HAP-1 (cell line): ENCODE measurements at regions of chr3 and their contacts with region 1.

Region 1: DNA sequence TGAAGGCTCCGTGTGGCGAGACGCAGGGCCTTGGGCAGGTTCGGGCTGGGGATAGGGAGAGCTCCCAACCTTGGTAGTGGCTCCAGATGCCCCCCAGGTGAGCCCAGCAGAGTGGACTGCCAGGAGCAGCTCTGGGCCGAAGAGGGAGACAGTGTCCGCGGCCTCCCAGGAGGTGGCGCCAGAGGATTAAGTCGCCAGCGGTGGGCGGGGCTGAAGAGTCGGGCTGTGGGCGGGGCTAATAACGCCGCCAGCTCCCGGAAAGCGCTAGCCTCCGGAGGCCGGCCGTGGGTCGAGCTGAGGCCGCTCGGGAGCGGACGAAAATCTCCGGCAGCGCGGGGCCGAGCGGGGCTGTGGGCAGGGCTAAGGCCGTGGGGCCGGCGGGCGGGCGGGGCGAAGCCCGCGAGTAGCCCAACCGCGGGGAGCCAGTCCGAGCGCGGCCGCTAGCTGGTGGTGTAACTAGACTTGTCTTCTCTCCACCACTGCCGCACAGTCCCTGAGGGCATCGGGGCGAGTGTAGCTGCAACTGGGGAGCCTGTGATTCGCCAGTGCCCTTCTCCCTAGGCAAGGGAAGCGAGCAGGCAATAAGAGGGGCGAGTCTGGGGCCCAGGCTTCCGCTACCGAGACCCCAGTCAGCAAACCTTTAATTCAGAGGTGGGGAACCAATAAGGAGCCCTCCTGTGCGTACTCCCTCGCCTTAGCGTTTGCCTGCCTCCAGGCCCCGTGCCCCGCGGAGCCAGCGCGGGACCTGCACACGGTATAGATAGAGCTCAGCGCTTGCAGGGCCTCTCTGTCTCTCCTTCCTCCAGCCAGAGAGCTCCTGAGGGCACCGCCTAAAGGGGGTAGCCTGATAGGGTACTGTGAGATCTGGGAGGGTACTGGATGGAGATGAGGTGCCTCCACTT is 14.4 kb upstream of the BSN start:
- DNase-seq: peak; percentile 90 to 96
- H3K4me3 ChIP-seq: peak overlapping the region; percentile 39
- H3K4me1 ChIP-seq: peaks cover 6% of the 10 kb centered on the region
- H3K27me3 ChIP-seq: no peaks in the 10 kb centered on the region; the same call in none of the 2 replicates

Region 2: GRCh38 chr3:49661281-49661680 is 121.4 kb after region 1 on chr3:
- in situ Hi-C with region 1: no loop called
- DNase-seq: no peak
- H3K4me3 ChIP-seq: no peak overlapping the region
- H3K4me1 ChIP-seq: no peaks in the 10 kb centered on the region
- H3K27me3 ChIP-seq: no peaks in the 10 kb centered on the region

Region 3: DNA sequence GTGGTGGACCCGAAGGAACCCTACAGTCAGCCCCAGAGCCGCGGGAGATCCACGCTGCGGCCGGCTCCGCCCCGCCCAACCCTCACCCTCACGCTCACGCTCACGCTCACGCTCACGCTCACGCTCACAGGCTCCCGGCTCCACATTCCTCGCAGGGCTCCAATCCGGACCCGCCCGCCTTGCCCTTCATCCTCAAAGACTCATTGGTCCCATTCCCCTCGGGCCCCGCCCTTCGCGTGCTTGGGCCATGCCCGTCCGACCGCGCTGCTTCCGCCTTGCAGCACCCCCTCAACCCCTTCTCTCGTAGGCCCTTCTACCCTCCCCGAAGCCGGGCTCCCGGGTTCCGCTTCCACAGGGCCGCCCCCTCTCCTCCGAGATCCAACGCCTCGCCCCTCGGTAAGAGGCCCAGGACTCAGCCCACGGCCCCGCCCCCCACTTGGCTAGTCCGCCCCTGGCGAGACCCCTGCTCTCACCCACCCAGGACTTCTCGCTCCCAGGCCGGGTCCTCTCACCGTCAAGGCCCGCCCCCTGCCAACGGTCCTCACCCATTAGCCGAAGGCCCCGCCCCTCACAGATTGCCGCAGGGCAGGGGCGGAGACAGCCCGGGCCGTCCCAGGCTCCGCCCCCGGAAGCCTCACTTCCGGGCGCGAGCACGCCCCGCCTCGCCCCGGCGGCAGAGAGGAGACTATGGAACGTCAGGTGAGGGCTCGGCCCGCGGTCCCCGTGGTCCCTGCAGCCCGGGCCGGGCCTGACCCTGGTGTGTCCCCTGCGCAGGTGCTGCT is 134.0 kb after region 1 on chr3 and contains the start of gene APEH:
- in situ Hi-C with region 1: loop called (anchors 5 kb)
- DNase-seq: peak; percentile 95 to 99
- H3K4me3 ChIP-seq: peak within 1 kb of the TSS; percentile 89
- H3K4me1 ChIP-seq: peaks cover 12% of the 10 kb centered on the region
- H3K27me3 ChIP-seq: no peaks in the 10 kb centered on the region

Region 4: DNA sequence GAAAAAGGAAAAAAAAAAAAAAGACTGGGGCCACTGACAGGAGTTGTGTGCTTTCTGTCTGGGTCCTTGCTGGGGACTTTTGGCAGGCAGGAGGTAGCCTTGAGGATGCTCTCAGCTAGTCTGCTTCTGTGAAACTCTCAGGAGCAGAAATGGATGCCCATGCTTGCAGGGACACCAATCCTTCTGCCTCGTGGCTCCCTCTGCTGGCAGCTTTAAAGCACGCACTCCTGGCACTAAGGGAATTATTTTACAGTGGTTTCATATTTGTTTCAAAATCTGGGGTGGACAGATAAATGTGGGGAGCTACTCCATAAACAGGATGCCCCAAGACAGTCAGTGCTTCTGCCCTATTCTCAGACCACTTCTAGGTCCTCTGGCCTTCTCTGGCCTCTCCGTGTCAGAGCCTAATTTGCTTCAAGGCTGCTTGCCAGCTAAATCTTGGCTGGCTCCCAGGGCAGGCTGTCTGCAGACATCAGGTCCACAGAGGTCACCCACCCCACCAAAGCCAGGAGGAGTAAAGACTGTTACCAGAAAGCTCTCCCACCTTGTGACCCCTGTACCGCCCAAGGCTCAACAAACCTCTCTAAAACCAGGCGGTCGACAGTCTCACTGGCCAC is 299.4 kb after region 1 on chr3:
- in situ Hi-C with region 1: loop called (anchors 25 kb)
- DNase-seq: peak; percentile 44 to 84
- H3K4me3 ChIP-seq: no peak overlapping the region
- H3K4me1 ChIP-seq: no peaks in the 10 kb centered on the region
- H3K27me3 ChIP-seq: no peaks in the 10 kb centered on the region